ENCODE measurements at regions of chr16 and their contacts with region 1.

Region 1: DNA sequence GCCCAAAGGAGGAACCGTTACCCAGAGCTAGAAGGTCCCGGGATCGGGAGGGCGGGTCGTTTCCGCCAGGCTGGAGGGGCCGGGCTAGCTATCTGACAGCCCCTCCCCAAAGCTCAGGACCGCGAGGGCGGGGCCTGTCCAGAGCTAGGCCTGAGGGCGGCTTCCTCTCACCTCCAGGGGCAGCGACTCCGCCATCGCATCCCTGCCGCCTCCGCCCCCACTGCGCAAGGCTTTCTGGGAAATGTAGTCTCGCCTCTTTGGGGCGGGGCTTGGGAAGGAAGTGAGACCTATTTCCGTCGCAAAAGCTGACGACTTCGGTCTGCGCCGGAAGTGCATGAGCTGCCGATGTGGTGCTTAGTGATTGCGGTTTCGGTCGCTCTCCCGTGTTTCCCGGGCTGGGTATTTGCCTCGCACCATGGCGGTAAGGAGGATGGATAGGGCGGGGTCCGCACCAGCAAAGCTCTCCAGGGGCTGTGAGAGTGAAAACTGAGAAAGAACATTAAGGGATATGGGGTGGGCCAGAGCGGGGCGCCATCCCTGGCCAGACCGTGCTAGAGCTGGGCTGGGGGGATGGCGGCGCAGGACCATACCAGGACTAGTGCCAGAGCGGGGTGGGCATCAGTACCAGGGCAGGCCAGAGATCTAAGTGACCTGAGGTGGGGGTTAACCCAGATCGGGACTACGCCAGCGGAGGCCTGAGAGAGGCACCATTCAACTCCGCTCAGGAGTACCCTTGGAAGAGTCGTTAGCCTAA is at the start of gene TMEM208:
- DNase-seq: peak; percentile 97 to 99 (median 98)
- H3K4me3 ChIP-seq: peak within 1 kb of the TSS; percentile 74 to 99 (median 92)
- H3K4me3 Mint-ChIP-seq: peak within 1 kb of the TSS; percentile 95 to 96
- H3K27ac ChIP-seq: peak within 1 kb of the TSS; percentile 58 to 92
- H3K27ac Mint-ChIP-seq: peak within 1 kb of the TSS; percentile 90 to 99 (median 96)
- H3K4me1 ChIP-seq: peaks cover 17 to 23% of the 10 kb centered on the region in 2 donors
- H3K4me1 Mint-ChIP-seq: peaks cover 26% of the 10 kb centered on the region
- H3K27me3 ChIP-seq: no peaks in the 10 kb centered on the region
- H3K27me3 Mint-ChIP-seq: peaks cover 0 to 1% (median 0%) of the 10 kb centered on the region in 3 donors
- CTCF ChIP-seq: no peak
- polyA plus RNA-seq, gene TMEM208: 45.4 to 130 (median 117) TPM

Region 2: GRCh38 chr16:67179481-67180009 is 47.4 kb before region 1 on chr16:
- intact Hi-C with region 1: no loop called
- DNase-seq: no peak
- H3K4me3 ChIP-seq: no peak overlapping the region
- H3K4me3 Mint-ChIP-seq: peak overlapping the region in 1 of 2 donors; percentile 91
- H3K27ac ChIP-seq: no peak overlapping the region
- H3K27ac Mint-ChIP-seq: no peak overlapping the region
- H3K4me1 ChIP-seq: peaks cover 42 to 53% of the 10 kb centered on the region in 2 donors
- H3K4me1 Mint-ChIP-seq: peaks cover 15% of the 10 kb centered on the region
- H3K27me3 ChIP-seq: peaks cover 12 to 41% of the 10 kb centered on the region in 2 donors
- H3K27me3 Mint-ChIP-seq: peaks cover 36 to 58% (median 42%) of the 10 kb centered on the region in 3 donors
- CTCF ChIP-seq: no peak

Region 3: DNA sequence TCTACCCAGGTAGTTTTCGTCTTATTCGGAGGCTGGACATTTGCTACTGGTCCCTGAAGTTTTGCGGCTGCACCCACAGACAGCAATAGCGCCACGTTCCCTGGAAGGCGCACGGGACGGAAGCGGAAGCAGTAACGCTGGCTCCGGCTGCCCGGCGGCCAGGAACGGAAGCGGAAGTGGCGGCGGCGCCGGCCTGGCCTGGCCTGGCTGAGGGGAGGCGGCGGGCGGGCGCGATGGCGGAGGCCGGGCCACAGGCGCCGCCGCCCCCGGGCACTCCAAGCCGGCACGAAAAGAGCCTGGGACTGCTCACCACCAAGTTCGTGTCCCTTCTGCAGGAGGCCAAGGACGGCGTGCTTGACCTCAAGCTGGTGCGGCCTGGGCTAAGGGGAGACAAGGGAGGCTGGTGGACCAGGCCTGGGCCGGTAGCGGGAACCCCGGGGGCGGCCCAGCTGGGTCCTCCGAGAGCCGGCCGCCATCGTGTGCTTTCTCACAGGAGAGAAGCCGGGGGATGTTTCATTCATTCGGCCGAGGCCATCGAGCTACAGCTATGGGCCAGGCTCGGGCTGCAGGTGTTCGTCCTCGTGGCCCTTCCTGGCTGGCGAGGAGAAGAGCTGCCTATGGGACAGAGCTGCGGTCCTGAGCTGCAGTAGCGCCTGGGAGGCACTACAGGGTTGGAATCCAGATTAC is 34.8 kb before region 1 on chr16 and contains the start of gene E2F4:
- intact Hi-C with region 1: loop called (anchors 5 kb)
- DNase-seq: peak; percentile 92 to 94 (median 93)
- H3K4me3 ChIP-seq: peak within 1 kb of the TSS; percentile 81 to 99 (median 95)
- H3K4me3 Mint-ChIP-seq: peak within 1 kb of the TSS; percentile 83 to 88
- H3K27ac ChIP-seq: peak within 1 kb of the TSS; percentile 53 to 87
- H3K27ac Mint-ChIP-seq: peak within 1 kb of the TSS; percentile 79 to 88 (median 83)
- H3K4me1 ChIP-seq: peaks cover 18 to 20% of the 10 kb centered on the region in 2 donors
- H3K4me1 Mint-ChIP-seq: peaks cover 30% of the 10 kb centered on the region
- H3K27me3 ChIP-seq: no peaks in the 10 kb centered on the region
- H3K27me3 Mint-ChIP-seq: peaks cover 0 to under 1% (median 0%) of the 10 kb centered on the region in 3 donors
- CTCF ChIP-seq: no peak
- polyA plus RNA-seq, gene E2F4: 53.1 to 191 (median 61.5) TPM

Measured in CD14-positive monocyte (primary cell).